Activated T-helper 1 cell treated with anti-CD3 and anti-CD28 coated beads, Interleukin-12 subunit alpha, Interleukin-12 subunit beta, Interleukin-2, Interleukin-4 antibody, amounts not matched to agents 30 ng/mL and 10 ng/mL and 1 ng/mL, durations not matched to agents 14 hours and 24 hours and 36 hours (primary cell): ENCODE measurements at regions of chr7 and their contacts with region 1.

Region 1: GRCh38 chr7:3154912-3155494 is 111.3 kb upstream of the CARD11 start:
- DNase-seq: peak; percentile 46
- H3K4me3 Mint-ChIP-seq: no peak overlapping the region
- H3K27ac Mint-ChIP-seq: no peak overlapping the region
- H3K4me1 Mint-ChIP-seq: peaks cover 34% of the 10 kb centered on the region
- H3K27me3 Mint-ChIP-seq: peaks cover 9% of the 10 kb centered on the region

Region 2: DNA sequence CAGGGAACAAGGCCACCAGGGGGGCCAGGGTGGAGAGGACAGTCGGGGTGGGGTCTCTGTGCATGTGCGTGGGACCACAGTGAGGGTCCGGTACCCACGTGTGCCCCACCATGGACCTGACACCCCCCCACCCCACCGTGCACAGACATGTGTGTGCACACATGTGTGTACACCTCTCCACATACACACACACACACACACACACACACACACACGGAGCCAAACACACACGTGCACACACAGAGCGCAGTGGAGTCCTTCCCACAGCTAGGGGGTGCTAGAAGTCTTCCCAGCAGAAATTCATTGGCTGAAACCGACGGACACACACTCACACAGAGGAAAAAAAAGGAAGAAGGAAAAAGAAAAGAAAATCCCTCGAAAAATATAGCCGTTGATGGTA is 268.1 kb before region 1 on chr7:
- intact Hi-C with region 1: loop called (anchors 1 kb)
- DNase-seq: peak; percentile 30
- H3K4me3 Mint-ChIP-seq: no peak overlapping the region
- H3K27ac Mint-ChIP-seq: no peak overlapping the region
- H3K4me1 Mint-ChIP-seq: peaks cover 5% of the 10 kb centered on the region
- H3K27me3 Mint-ChIP-seq: peaks cover 1% of the 10 kb centered on the region

Region 3: GRCh38 chr7:2894118-2894940 is 260.7 kb before region 1 on chr7:
- intact Hi-C with region 1: loop called (anchors 2 kb)
- DNase-seq: peak; percentile 43
- H3K4me3 Mint-ChIP-seq: peak overlapping the region; percentile 87
- H3K27ac Mint-ChIP-seq: peak overlapping the region; percentile 99
- H3K4me1 Mint-ChIP-seq: peaks cover 37% of the 10 kb centered on the region
- H3K27me3 Mint-ChIP-seq: peaks cover 1% of the 10 kb centered on the region

Region 4: GRCh38 chr7:2956526-2957368 is 198.3 kb before region 1 on chr7:
- intact Hi-C with region 1: loop called (anchors 10 kb)
- DNase-seq: peak; percentile 44
- H3K4me3 Mint-ChIP-seq: peak overlapping the region; percentile 27
- H3K27ac Mint-ChIP-seq: peak overlapping the region; percentile 92
- H3K4me1 Mint-ChIP-seq: peaks cover 71% of the 10 kb centered on the region
- H3K27me3 Mint-ChIP-seq: no peaks in the 10 kb centered on the region

Region 5: DNA sequence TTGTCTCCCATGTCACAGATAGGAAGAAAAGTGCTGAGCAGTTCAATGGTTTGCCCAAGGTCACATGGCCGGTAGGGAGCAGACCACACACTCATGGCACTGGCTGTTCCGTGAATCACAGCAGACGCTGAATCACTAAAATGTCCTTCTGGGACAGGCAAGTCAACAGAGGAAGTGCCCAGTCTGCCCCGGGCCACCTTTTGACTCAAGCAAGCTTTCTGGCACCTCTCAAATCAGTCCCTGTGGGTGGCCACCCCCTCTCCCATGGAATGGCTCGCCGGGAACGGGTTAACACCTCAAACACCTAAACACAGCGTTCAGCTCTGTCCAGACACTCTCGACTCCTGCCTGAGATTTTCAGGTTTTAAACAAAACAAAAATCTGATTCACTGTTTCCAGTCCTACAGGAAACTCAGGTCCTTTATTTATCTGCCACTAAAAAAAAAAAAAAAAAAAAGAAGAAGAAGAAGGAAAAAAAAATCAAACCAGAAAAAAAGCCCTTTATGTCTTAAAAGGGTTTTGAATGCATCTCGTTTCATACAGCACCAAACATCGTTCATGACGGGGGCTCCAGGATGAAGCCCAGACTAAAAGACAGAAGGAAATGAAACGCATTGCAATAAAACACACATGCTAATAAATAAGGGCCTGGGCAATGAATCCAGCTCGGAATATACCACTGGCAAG is 126.8 kb before region 1 on chr7:
- intact Hi-C with region 1: loop called (anchors 1 kb)
- DNase-seq: peak; percentile 8
- H3K4me3 Mint-ChIP-seq: peak overlapping the region; percentile 60
- H3K27ac Mint-ChIP-seq: peak overlapping the region; percentile 92
- H3K4me1 Mint-ChIP-seq: peaks cover 60% of the 10 kb centered on the region
- H3K27me3 Mint-ChIP-seq: no peaks in the 10 kb centered on the region

Region 6: DNA sequence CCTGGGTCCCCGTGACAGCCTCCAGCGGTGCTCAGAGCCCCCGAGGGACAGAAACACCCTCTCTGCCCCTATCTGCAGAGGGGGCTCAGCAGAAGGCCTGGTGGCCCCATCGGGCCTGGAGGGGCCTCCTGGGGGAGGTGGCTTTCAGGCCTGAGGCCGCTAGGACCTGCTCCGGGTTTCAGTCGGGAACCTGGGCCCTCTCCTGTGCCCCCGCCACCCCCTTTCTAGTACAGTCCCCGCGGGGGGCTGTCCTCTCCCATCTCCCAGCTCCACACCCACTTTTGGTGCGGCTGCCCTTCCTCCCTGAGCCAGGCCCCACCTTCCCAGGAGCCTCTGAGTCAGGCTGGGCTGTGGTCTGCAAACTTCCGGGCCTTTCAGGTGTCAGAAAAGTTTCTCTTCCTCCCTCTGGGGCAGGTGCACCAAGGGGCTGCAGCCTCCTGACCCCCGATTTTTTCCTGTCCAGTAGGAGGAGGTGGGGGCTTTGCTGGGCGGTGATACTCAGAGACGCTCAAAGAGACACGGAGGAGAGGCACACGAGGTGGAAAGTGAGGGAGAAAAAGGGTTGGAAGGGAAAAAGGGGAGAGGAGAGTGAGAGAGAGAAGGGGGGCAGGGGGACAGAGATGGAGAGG is 112.0 kb before region 1 on chr7:
- intact Hi-C with region 1: loop called (anchors 1 kb)
- DNase-seq: peak; percentile 65
- H3K4me3 Mint-ChIP-seq: peak overlapping the region; percentile 97
- H3K27ac Mint-ChIP-seq: peak overlapping the region; percentile 95
- H3K4me1 Mint-ChIP-seq: peaks cover 47% of the 10 kb centered on the region
- H3K27me3 Mint-ChIP-seq: no peaks in the 10 kb centered on the region

Region 7: GRCh38 chr7:3092468-3092867 is 62.5 kb before region 1 on chr7:
- intact Hi-C with region 1: loop called (anchors 2 kb)
- DNase-seq: peak; percentile 74
- H3K4me3 Mint-ChIP-seq: peak overlapping the region; percentile 15
- H3K27ac Mint-ChIP-seq: peak overlapping the region; percentile 94
- H3K4me1 Mint-ChIP-seq: peaks cover 56% of the 10 kb centered on the region
- H3K27me3 Mint-ChIP-seq: no peaks in the 10 kb centered on the region